CD8-positive, alpha-beta memory T cell (primary cell): ENCODE measurements at regions of chr22 and their contacts with region 1.

Region 1: GRCh38 chr22:19730655-19731360 is 7.5 kb downstream of the GP1BB start:
- DNase-seq: peak; percentile 71 to 88 (median 81)
- H3K4me3 ChIP-seq: peak overlapping the region; percentile 63
- H3K4me3 Mint-ChIP-seq: peak overlapping the region; percentile 63 to 81 (median 80)
- H3K27ac ChIP-seq: peak overlapping the region; percentile 38
- H3K27ac Mint-ChIP-seq: peak overlapping the region in 1 of 8 donors; percentile 57
- H3K4me1 ChIP-seq: peaks cover 9% of the 10 kb centered on the region
- H3K4me1 Mint-ChIP-seq: peaks cover 0 to 4% (median 2%) of the 10 kb centered on the region in 3 donors
- H3K27me3 ChIP-seq: no peaks in the 10 kb centered on the region
- H3K27me3 Mint-ChIP-seq: peaks cover 4 to 5% of the 10 kb centered on the region in 2 donors

Region 2: DNA sequence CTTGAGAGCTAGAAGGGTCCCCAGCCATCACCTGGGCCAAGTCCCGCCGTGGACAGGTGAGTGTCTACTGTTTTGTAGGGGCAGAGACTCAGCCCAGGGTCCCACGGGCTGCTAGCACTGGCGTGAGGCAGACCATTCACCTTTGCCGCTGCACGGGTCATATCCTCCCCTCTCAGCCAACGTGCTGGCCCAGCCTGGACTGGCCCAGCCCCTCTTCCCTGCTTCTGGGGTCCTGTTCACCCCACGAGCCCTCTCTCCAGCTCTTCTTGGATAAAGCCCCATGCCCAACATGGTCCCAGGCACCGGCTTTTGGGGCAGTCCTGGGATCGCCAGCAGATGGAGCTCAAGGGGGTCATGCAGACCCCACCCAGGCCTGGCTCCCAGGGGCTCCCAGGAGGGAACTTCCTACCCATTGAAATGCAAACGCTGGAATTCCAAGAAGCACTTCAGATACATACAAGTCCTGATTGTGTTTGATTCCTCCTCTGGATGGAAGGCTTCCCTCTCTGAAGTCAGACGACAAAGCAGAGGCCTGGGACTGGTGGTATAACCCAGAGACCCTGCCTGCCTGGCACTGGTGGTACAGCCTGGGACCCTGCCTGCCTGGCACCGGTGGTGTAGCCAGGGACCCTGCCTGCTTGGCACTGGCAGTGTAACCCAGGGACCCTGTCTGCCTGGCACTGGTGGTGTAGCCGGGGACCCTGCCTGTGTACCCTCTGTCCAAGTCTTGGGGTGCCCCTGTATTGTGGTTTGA is 25.4 kb before region 1 on chr22:
- CTCF ChIA-PET with region 1: no interaction called
- POLR2A ChIA-PET with region 1: no interaction called
- DNase-seq: no peak
- H3K4me3 ChIP-seq: no peak overlapping the region
- H3K4me3 Mint-ChIP-seq: no peak overlapping the region
- H3K27ac ChIP-seq: no peak overlapping the region
- H3K27ac Mint-ChIP-seq: no peak overlapping the region
- H3K4me1 ChIP-seq: no peaks in the 10 kb centered on the region
- H3K4me1 Mint-ChIP-seq: no peaks in the 10 kb centered on the region
- H3K27me3 ChIP-seq: peaks cover 13% of the 10 kb centered on the region
- H3K27me3 Mint-ChIP-seq: peaks cover 4 to 9% of the 10 kb centered on the region in 2 donors

Region 3: GRCh38 chr22:19742160-19743066 is 11.6 kb after region 1 on chr22:
- CTCF ChIA-PET with region 1: interaction called, 10 read pairs
- POLR2A ChIA-PET with region 1: no interaction called
- DNase-seq: no peak
- H3K4me3 ChIP-seq: no peak overlapping the region
- H3K4me3 Mint-ChIP-seq: no peak overlapping the region
- H3K27ac ChIP-seq: no peak overlapping the region
- H3K27ac Mint-ChIP-seq: no peak overlapping the region
- H3K4me1 ChIP-seq: no peaks in the 10 kb centered on the region
- H3K4me1 Mint-ChIP-seq: no peaks in the 10 kb centered on the region
- H3K27me3 ChIP-seq: no peaks in the 10 kb centered on the region
- H3K27me3 Mint-ChIP-seq: no peaks in the 10 kb centered on the region

Region 4: GRCh38 chr22:19891317-19892256 is 160.8 kb after region 1 on chr22:
- CTCF ChIA-PET with region 1: interaction called, 12 read pairs
- POLR2A ChIA-PET with region 1: no interaction called
- DNase-seq: peak; percentile 45 to 88 (median 72)
- H3K4me3 ChIP-seq: peak overlapping the region; percentile 71
- H3K4me3 Mint-ChIP-seq: peak overlapping the region; percentile 77 to 91 (median 83)
- H3K27ac ChIP-seq: peak overlapping the region; percentile 63
- H3K27ac Mint-ChIP-seq: peak overlapping the region; percentile 88 to 99 (median 96)
- H3K4me1 ChIP-seq: peaks cover 88% of the 10 kb centered on the region
- H3K4me1 Mint-ChIP-seq: peaks cover 39 to 53% (median 51%) of the 10 kb centered on the region in 3 donors
- H3K27me3 ChIP-seq: no peaks in the 10 kb centered on the region
- H3K27me3 Mint-ChIP-seq: no peaks in the 10 kb centered on the region

Region 5: DNA sequence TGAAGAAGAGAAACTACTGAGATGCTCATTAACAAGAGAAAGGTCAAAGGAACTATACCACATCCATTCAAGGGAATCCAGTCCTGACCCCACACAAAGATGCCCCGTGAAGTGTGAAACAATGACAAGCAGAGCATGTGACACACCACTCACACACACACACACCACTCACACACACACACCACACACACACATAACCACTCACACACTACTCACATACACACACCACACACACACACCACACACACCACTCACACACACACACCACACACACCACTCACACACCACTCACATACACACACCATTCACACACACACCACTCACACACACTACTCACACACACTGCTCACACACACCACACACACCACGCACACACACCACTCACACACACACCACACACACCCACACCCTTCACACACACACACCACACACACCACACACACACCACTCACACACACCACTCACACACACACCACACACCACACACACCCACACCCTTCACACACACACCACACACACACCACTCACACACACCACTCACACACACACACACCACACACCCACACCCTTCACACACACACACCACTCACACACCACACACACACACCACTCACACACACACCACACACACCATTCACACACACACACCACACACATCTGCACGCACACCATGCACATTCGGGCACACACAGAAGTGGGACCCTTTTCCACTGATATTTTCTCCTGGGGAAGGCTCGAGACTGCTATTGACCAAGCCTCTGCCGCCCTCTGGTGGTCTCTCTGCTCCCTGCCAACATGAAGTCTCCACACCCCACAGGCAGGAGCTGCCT is 178.8 kb after region 1 on chr22:
- CTCF ChIA-PET with region 1: interaction called, 111 read pairs
- POLR2A ChIA-PET with region 1: interaction called, 4 read pairs
- DNase-seq: peak; percentile 65 to 85 (median 76)
- H3K4me3 ChIP-seq: no peak overlapping the region
- H3K4me3 Mint-ChIP-seq: peak overlapping the region in 1 of 7 donors; percentile 57
- H3K27ac ChIP-seq: no peak overlapping the region
- H3K27ac Mint-ChIP-seq: peak overlapping the region in 5 of 8 donors; percentile 12 to 96 (median 87)
- H3K4me1 ChIP-seq: peaks cover 6% of the 10 kb centered on the region
- H3K4me1 Mint-ChIP-seq: peaks cover 1 to 8% (median 4%) of the 10 kb centered on the region in 3 donors
- H3K27me3 ChIP-seq: no peaks in the 10 kb centered on the region
- H3K27me3 Mint-ChIP-seq: no peaks in the 10 kb centered on the region

Region 6: DNA sequence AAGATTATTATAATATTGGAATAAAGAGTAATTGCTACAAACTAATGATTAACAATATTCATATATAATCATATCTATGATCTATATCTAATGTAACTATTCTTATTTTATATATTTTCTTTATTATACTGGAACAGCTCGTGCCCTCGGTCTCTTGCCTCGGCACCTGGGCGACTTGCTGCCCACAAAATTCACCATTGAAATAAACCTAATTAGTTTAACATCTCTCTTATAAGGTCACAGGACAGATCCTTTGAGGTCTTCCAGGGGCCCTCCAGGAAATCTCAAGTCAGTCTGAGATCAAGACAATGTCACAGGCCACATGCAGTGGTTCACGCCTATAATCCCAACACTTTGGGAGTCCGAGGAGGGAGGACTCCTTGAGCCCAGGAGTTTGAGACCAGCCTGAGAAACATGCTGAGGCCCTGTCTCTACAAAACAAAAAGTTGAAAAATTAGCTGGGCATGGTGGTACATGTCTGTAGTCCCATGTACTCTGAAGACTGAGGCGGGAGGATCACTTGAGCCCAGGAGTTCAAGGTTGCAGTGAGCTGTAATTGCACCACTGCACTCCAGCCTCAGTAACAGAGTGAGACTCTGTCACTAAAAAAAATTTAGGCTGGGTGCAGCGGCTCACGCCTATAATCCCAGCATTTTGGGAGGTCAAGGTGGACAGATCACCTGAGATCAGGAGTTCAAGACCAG is 217.4 kb after region 1 on chr22:
- CTCF ChIA-PET with region 1: interaction called, 17 read pairs
- POLR2A ChIA-PET with region 1: no interaction called
- DNase-seq: no peak
- H3K4me3 ChIP-seq: no peak overlapping the region
- H3K4me3 Mint-ChIP-seq: no peak overlapping the region
- H3K27ac ChIP-seq: peak overlapping the region; percentile 7
- H3K27ac Mint-ChIP-seq: peak overlapping the region in 1 of 8 donors; percentile 23
- H3K4me1 ChIP-seq: peaks cover 13% of the 10 kb centered on the region
- H3K4me1 Mint-ChIP-seq: peaks cover 22 to 34% (median 30%) of the 10 kb centered on the region in 3 donors
- H3K27me3 ChIP-seq: no peaks in the 10 kb centered on the region
- H3K27me3 Mint-ChIP-seq: no peaks in the 10 kb centered on the region